Motor neuron (in vitro differentiated cells): ENCODE measurements at regions of chr1 and their contacts with region 1.

Region 1: GRCh38 chr1:235079443-235080296 is 49.0 kb downstream of the TOMM20 start:
- ATAC-seq: no peak
- H3K4me3 ChIP-seq: no peak overlapping the region
- H3K27ac ChIP-seq: no peak overlapping the region
- H3K4me1 ChIP-seq: peaks cover 29% of the 10 kb centered on the region in 2 donors

Region 2: GRCh38 chr1:234499119-234499942 is 580.3 kb before region 1 on chr1:
- in situ Hi-C with region 1: loop called in 7 of 9 experiments (anchors 10 to 25 kb)
- ATAC-seq: peak; percentile 56 to 98 (median 96)
- H3K4me3 ChIP-seq: peak overlapping the region in 2 of 5 donors; percentile 1 to 3
- H3K27ac ChIP-seq: peak overlapping the region in 1 of 2 donors; percentile 67
- H3K4me1 ChIP-seq: peaks cover 15 to 32% of the 10 kb centered on the region in 2 donors